ENCODE measurements at regions of chr10 and their contacts with region 1.

Region 1: DNA sequence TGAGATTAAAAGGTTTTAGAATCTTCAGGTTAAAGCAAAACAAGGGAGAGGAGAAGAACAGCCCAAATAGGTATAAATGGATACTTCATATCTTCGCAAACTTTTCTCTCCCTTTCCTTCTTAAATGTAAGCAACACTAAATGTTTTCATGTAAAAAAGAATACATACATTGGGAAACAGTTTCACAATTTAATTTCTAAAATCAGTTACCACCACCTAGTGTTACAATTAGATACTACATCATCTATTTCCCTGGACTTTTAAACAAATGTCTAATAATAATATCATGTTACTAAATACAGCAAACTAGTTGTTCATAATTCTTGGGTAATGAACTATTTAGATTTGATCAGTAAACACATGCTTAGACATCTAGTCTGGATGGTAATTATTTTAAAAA is 35.8 kb downstream of the MINDY3 start:
- DNase-seq: no peak
- ATAC-seq: no peak
- H3K4me3 ChIP-seq: no peak overlapping the region
- H3K27ac ChIP-seq: no peak overlapping the region
- H3K4me1 ChIP-seq: peaks cover 0 to 11% (median 0%) of the 10 kb centered on the region in 9 donors
- H3K27me3 ChIP-seq: no peaks in the 10 kb centered on the region
- CTCF ChIP-seq: peak; percentile 26 to 71 (median 55)

Region 2: DNA sequence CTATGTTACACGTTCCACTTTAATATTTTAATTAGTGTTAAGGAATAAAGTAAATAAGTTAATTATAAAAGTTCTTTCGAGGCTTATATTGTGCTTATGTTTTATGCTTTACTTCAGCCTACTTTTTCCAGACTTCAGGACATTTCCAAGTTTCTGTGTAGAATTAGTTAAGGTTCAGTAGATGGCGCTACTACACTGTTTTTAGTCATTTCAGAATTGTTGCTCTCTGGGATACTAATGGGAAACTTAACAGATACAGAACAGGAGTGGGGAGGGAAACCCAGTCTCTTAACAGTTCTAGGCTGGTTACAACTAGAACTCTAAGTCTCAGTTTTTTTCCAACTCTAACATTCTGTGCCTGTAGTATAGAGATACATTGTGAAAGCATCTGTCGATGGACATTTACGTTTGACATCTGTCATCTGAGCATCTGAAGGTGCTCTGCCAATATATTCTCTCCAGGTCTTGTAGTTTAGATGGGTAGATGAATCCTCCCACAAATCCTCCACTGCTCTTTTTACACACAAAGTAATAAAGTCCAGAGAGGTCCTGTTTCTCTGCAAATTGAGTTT is 396.6 kb before region 1 on chr10:
- intact Hi-C with region 1: loop called in 8 of 10 experiments (anchors 2 to 5 kb)
- DNase-seq: no peak
- ATAC-seq: peak in 1 of 8 donors; percentile 39
- H3K4me3 ChIP-seq: no peak overlapping the region
- H3K27ac ChIP-seq: no peak overlapping the region
- H3K4me1 ChIP-seq: no peaks in the 10 kb centered on the region
- H3K27me3 ChIP-seq: peaks cover 0 to 5% (median 0%) of the 10 kb centered on the region in 7 donors
- CTCF ChIP-seq: peak in 8 of 9 donors; percentile 39 to 72 (median 58)

Region 3: GRCh38 chr10:15433850-15434537 is 390.5 kb before region 1 on chr10:
- intact Hi-C with region 1: loop called in 9 of 10 experiments (anchors 2 to 5 kb)
- DNase-seq: peak in 1 of 2 donors; percentile 57
- ATAC-seq: peak in 7 of 8 donors; percentile 38 to 87 (median 70)
- H3K4me3 ChIP-seq: peak overlapping the region in 7 of 10 donors; percentile 24 to 49 (median 41)
- H3K27ac ChIP-seq: no peak overlapping the region
- H3K4me1 ChIP-seq: peaks cover 0 to 7% (median 2%) of the 10 kb centered on the region in 9 donors
- H3K27me3 ChIP-seq: peaks cover 0 to 5% (median 0%) of the 10 kb centered on the region in 7 donors
- CTCF ChIP-seq: peak; percentile 69 to 86 (median 79)

Region 4: GRCh38 chr10:15439341-15439842 is 385.1 kb before region 1 on chr10:
- intact Hi-C with region 1: loop called in 7 of 10 experiments (anchors 5 kb)
- DNase-seq: peak; percentile 52 to 81
- ATAC-seq: peak; percentile 80 to 96 (median 93)
- H3K4me3 ChIP-seq: peak overlapping the region in 9 of 10 donors; percentile 1 to 49 (median 35)
- H3K27ac ChIP-seq: peak overlapping the region; percentile 47 to 83 (median 62)
- H3K4me1 ChIP-seq: peaks cover 0 to 20% (median 13%) of the 10 kb centered on the region in 9 donors
- H3K27me3 ChIP-seq: no peaks in the 10 kb centered on the region
- CTCF ChIP-seq: peak in 6 of 9 donors; percentile 19 to 53 (median 43)

Region 5: GRCh38 chr10:15725603-15726002 is 98.9 kb before region 1 on chr10:
- intact Hi-C with region 1: loop called in 5 of 10 experiments (anchors 5 to 10 kb)
- DNase-seq: no peak
- ATAC-seq: peak in 7 of 8 donors; percentile 51 to 82 (median 64)
- H3K4me3 ChIP-seq: no peak overlapping the region
- H3K27ac ChIP-seq: no peak overlapping the region
- H3K4me1 ChIP-seq: no peaks in the 10 kb centered on the region
- H3K27me3 ChIP-seq: peaks cover 0 to 16% (median 11%) of the 10 kb centered on the region in 7 donors
- CTCF ChIP-seq: peak; percentile 32 to 72 (median 54)

Measured in heart right ventricle (tissue), 16 donors.